ENCODE measurements at regions of chr20 and their contacts with region 1.

Region 1: GRCh38 chr20:41738604-41739206 is 120.5 kb upstream of the CHD6 start:
- DNase-seq: peak; percentile 64
- H3K4me3 ChIP-seq: 0 out of 4 replicates have a peak overlapping the region, but pooled peaks of 1 of the 2 experiments have one; percentile 11
- H3K27ac ChIP-seq: no peak overlapping the region
- H3K4me1 ChIP-seq: no peaks in the 10 kb centered on the region; a peak in 1 of 4 replicates
- H3K27me3 ChIP-seq: no peaks in the 10 kb centered on the region
- CTCF ChIP-seq: peak; percentile 72
- EP300 ChIP-seq: no peak
- RAD21 ChIP-seq: peak; percentile 94

Region 2: GRCh38 chr20:41693136-41693979 is 45.3 kb before region 1 on chr20:
- CTCF ChIA-PET with region 1: interaction called, 11 read pairs
- POLR2A ChIA-PET with region 1: no interaction called
- DNase-seq: peak; percentile 77
- H3K4me3 ChIP-seq: peak overlapping the region; percentile 79 to 80
- H3K27ac ChIP-seq: peak overlapping the region; percentile 20 to 95; a peak in 3 of 4 replicates
- H3K4me1 ChIP-seq: peaks cover 0 to 5% of the 10 kb centered on the region in 2 experiments; a peak in 1 of 4 replicates
- H3K27me3 ChIP-seq: no peaks in the 10 kb centered on the region; the same call in 1 of the 2 replicates
- CTCF ChIP-seq: peak; percentile 76
- EP300 ChIP-seq: no peak
- RAD21 ChIP-seq: no peak

Region 3: GRCh38 chr20:41877911-41878310 is 139.2 kb after region 1 on chr20:
- CTCF ChIA-PET with region 1: interaction called, 10 read pairs
- POLR2A ChIA-PET with region 1: no interaction called
- DNase-seq: no peak
- H3K4me3 ChIP-seq: no peak overlapping the region
- H3K27ac ChIP-seq: no peak overlapping the region
- H3K4me1 ChIP-seq: no peaks in the 10 kb centered on the region
- H3K27me3 ChIP-seq: no peaks in the 10 kb centered on the region
- CTCF ChIP-seq: no peak
- EP300 ChIP-seq: no peak
- RAD21 ChIP-seq: no peak

Region 4: GRCh38 chr20:41900201-41900691 is 161.5 kb after region 1 on chr20:
- CTCF ChIA-PET with region 1: interaction called, 10 read pairs
- POLR2A ChIA-PET with region 1: no interaction called
- DNase-seq: no peak
- H3K4me3 ChIP-seq: no peak overlapping the region
- H3K27ac ChIP-seq: no peak overlapping the region
- H3K4me1 ChIP-seq: peaks cover 0 to 4% of the 10 kb centered on the region in 2 experiments; a peak in 1 of 4 replicates
- H3K27me3 ChIP-seq: no peaks in the 10 kb centered on the region
- CTCF ChIP-seq: no peak
- EP300 ChIP-seq: no peak
- RAD21 ChIP-seq: no peak

Region 5: DNA sequence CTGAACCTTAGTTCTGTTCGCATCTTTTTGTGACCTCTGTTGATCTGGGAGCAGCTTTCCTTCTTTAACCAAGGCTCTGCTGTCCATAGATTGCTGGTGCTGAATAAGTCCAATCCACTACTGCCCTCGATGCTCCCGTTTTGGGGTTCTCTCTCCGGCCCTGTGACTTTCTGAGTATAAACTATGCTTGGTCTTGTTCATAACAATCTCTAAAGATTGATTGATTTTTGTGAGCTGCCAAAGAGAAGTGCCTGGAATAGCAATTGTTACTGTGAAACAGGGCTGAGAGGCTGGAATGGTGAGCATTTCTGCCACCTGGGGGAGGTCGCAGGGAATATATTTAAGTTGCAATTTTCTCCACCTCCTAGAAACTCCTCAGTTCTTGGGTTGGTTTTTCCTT is 302.4 kb after region 1 on chr20:
- CTCF ChIA-PET with region 1: interaction called, 24 read pairs
- POLR2A ChIA-PET with region 1: no interaction called
- DNase-seq: no peak
- H3K4me3 ChIP-seq: no peak overlapping the region
- H3K27ac ChIP-seq: no peak overlapping the region
- H3K4me1 ChIP-seq: peaks cover 0 to 13% of the 10 kb centered on the region in 2 experiments; a peak in 1 of 4 replicates
- H3K27me3 ChIP-seq: no peaks in the 10 kb centered on the region
- CTCF ChIP-seq: no peak
- EP300 ChIP-seq: no peak
- RAD21 ChIP-seq: peak; percentile 61

Region 6: GRCh38 chr20:43187476-43188233 is 1449.0 kb after region 1 on chr20:
- CTCF ChIA-PET with region 1: interaction called, 90 read pairs
- POLR2A ChIA-PET with region 1: no interaction called
- DNase-seq: peak; percentile 86
- H3K4me3 ChIP-seq: peak overlapping the region in 1 of 2 experiments; percentile 43; a peak in 2 of 4 replicates
- H3K27ac ChIP-seq: no peak overlapping the region
- H3K4me1 ChIP-seq: peaks cover 0 to 6% of the 10 kb centered on the region in 2 experiments; a peak in 1 of 4 replicates
- H3K27me3 ChIP-seq: no peaks in the 10 kb centered on the region
- CTCF ChIP-seq: peak; percentile 96
- EP300 ChIP-seq: no peak
- RAD21 ChIP-seq: peak; percentile 87

Measured in SK-N-SH (cell line).